Gastrocnemius medialis (tissue), 4 donors: ENCODE measurements at regions of chr3 and their contacts with region 1.

Region 1: GRCh38 chr3:64368257-64369020 is 143.2 kb upstream of the PRICKLE2 start:
- DNase-seq: no peak
- ATAC-seq: no peak
- H3K4me3 ChIP-seq: no peak overlapping the region
- H3K27ac ChIP-seq: no peak overlapping the region
- H3K4me1 ChIP-seq: no peaks in the 10 kb centered on the region
- H3K27me3 ChIP-seq: no peaks in the 10 kb centered on the region
- CTCF ChIP-seq: no peak
- POLR2A ChIP-seq: no peak

Region 2: DNA sequence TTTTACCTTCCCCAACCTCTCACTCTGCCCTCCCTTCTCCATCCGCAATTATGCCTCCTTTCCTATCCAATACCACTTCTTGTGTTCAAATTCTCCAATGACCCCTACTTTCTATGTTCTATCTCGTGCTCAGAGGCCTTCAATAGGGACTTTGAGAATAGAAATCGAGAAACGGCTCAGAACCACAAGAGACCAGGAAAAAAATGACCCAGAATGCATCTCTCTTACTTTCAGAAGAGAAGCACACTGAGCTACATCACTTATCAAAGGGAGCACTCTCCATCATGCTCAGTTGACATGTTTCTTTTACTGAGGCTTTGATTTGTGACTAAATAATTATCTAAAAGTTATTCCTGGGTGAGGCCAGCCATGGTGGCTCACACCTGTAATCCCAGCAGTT is 19.2 kb after region 1 on chr3:
- in situ Hi-C with region 1: no loop called
- intact Hi-C with region 1: loop called (anchors 2 kb)
- DNase-seq: no peak
- ATAC-seq: no peak
- H3K4me3 ChIP-seq: no peak overlapping the region
- H3K27ac ChIP-seq: no peak overlapping the region
- H3K4me1 ChIP-seq: no peaks in the 10 kb centered on the region
- H3K27me3 ChIP-seq: no peaks in the 10 kb centered on the region
- CTCF ChIP-seq: no peak
- POLR2A ChIP-seq: no peak